Mammary epithelial cell (primary cell): ENCODE measurements at regions of chr6 and their contacts with region 1.

Region 1: GRCh38 chr6:45814772-45815171 is 200.9 kb downstream of the CLIC5 start:
- DNase-seq: no peak
- H3K4me3 ChIP-seq: no peak overlapping the region
- H3K27ac ChIP-seq: no peak overlapping the region
- H3K4me1 ChIP-seq: no peaks in the 10 kb centered on the region
- H3K27me3 ChIP-seq: no peaks in the 10 kb centered on the region
- CTCF ChIP-seq: no peak

Region 2: GRCh38 chr6:44630125-44631028 is 1184.4 kb before region 1 on chr6:
- CTCF ChIA-PET with region 1: interaction called, 11 read pairs
- dilution Hi-C with region 1: no loop called
- in situ Hi-C with region 1: no loop called
- intact Hi-C with region 1: no loop called
- DNase-seq: peak; percentile 33
- H3K4me3 ChIP-seq: no peak overlapping the region
- H3K27ac ChIP-seq: no peak overlapping the region
- H3K4me1 ChIP-seq: no peaks in the 10 kb centered on the region
- H3K27me3 ChIP-seq: no peaks in the 10 kb centered on the region
- CTCF ChIP-seq: peak; percentile 46 to 74